ENCODE measurements at regions of chr12 and their contacts with region 1.

Region 1: DNA sequence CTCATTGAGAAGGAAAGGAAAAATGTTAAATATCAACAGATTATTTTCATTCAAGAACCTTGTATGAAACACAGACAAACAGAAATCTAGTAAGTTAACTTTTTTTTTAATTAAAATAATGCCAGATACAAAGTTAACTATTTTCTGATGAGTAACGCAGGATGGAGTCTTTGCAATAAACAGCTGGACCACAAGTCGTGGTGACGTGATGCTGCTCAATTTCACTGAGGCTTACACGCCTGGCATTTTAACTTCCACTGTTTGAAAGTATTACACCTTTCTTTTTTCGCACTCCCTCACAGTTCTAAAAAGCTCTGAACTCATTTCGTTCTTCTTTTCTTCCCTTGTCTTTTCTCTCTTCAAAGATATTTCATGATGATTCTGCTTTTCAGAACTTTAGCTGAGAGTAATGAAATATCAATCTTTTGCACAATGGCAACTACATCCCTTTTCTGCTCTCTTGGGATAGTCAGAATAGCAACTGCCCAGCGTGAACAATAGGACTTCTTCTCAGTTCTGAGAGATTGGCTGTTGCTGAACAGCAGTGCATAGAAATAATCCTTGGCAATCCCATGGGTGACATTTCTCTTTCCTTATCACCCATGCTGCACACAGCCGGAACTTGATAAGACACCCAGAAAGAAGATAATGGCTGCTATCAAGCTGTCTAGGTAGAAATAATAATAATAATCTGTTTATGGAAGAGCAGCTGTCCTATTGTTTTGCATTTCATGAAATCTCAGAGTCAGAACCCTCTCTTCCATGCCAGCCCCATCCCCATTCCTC is 160.5 kb downstream of the BTG1 start:
- DNase-seq: no peak
- ATAC-seq: no peak
- H3K4me3 ChIP-seq: no peak overlapping the region
- H3K4me3 Mint-ChIP-seq: no peak overlapping the region
- H3K27ac ChIP-seq: no peak overlapping the region
- H3K27ac Mint-ChIP-seq: no peak overlapping the region
- H3K4me1 ChIP-seq: peaks cover 3% of the 10 kb centered on the region
- H3K4me1 Mint-ChIP-seq: peaks cover 73% of the 10 kb centered on the region
- H3K27me3 ChIP-seq: no peaks in the 10 kb centered on the region
- H3K27me3 Mint-ChIP-seq: no peaks in the 10 kb centered on the region
- CTCF ChIP-seq: no peak

Region 2: GRCh38 chr12:92123780-92124688 is 138.8 kb after region 1 on chr12:
- CTCF ChIA-PET with region 1: no interaction called
- POLR2A ChIA-PET with region 1: interaction called, 6 read pairs
- intact Hi-C with region 1: loop called in 1 of 2 experiments (anchors 5 kb)
- DNase-seq: no peak
- ATAC-seq: peak; percentile 13
- H3K4me3 ChIP-seq: no peak overlapping the region
- H3K4me3 Mint-ChIP-seq: peak overlapping the region; percentile 43
- H3K27ac ChIP-seq: no peak overlapping the region
- H3K27ac Mint-ChIP-seq: peak overlapping the region; percentile 76
- H3K4me1 ChIP-seq: peaks cover 18% of the 10 kb centered on the region
- H3K4me1 Mint-ChIP-seq: peaks cover 72% of the 10 kb centered on the region
- H3K27me3 ChIP-seq: no peaks in the 10 kb centered on the region
- H3K27me3 Mint-ChIP-seq: no peaks in the 10 kb centered on the region
- CTCF ChIP-seq: no peak